ENCODE measurements at regions of chr4 and their contacts with region 1.

Region 1: DNA sequence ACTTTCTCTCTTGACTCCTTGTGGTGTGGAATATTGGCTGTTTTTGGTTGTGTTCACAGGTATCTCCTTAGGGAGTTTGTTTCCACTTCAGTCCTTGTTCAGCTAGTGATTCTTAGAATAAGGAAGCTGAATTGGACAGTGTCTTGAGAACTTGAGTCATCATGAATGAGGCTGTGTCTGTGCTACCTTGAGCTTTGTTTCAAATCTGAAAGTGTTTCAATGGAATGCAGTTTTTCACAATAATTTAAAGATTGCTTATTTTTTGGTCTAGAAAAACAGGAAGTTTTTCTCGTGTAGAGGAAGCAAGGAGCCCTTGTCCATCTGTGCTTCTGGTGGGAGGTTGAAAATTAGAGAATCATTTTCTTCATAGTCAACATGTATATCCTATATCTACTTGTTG is 76.5 kb downstream of the ZNF518B start:
- DNase-seq: no peak
- ATAC-seq: no peak
- H3K4me3 ChIP-seq: no peak overlapping the region
- H3K27ac ChIP-seq: no peak overlapping the region
- H3K4me1 ChIP-seq: no peaks in the 10 kb centered on the region
- H3K27me3 ChIP-seq: no peaks in the 10 kb centered on the region
- CTCF ChIP-seq: no peak
- POLR2A ChIP-seq: no peak

Region 2: DNA sequence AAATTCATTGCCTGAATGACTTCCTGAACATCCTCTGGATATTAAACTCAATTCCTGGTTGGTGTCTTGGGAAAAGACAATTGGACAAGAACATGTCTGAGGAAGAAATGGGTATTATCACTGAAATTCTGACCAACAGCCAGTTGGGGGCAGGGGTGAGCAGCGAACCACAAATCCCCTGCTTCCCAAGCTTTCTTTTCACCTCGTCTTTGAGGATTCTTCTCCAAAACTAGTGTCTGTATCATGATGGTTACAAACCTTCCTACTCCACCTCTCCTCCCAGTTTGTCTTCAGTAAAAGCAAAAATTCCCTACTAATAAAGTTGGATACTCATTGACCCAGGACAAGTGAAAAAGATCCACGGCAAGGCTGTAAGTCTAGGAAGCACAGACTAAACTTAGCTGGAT is 215.9 kb before region 1 on chr4:
- intact Hi-C with region 1: loop called in 1 of 2 experiments (anchors 10 kb)
- DNase-seq: peak in 1 of 3 donors; percentile 30
- ATAC-seq: peak in 3 of 4 donors; percentile 25 to 49 (median 39)
- H3K4me3 ChIP-seq: no peak overlapping the region
- H3K27ac ChIP-seq: no peak overlapping the region
- H3K4me1 ChIP-seq: peaks cover 0 to 26% (median 9%) of the 10 kb centered on the region in 4 donors
- H3K27me3 ChIP-seq: no peaks in the 10 kb centered on the region
- CTCF ChIP-seq: peak; percentile 45 to 61 (median 59)
- POLR2A ChIP-seq: no peak

Measured in right lobe of liver (tissue), 6 donors.